Heart left ventricle (tissue), 16 donors: ENCODE measurements at regions of chr12 and their contacts with region 1.

Region 1: GRCh38 chr12:27549801-27550652 is 26.0 kb downstream of the PPFIBP1 start:
- DNase-seq: peak; percentile 85 to 91 (median 88)
- ATAC-seq: peak; percentile 81 to 90 (median 89)
- H3K4me3 ChIP-seq: peak overlapping the region in 8 of 12 donors; percentile 3 to 28 (median 18)
- H3K27ac ChIP-seq: peak overlapping the region; percentile 68 to 94 (median 87)
- H3K4me1 ChIP-seq: peaks cover 17 to 100% (median 89%) of the 10 kb centered on the region in 12 donors
- H3K27me3 ChIP-seq: no peaks in the 10 kb centered on the region
- CTCF ChIP-seq: no peak
- POLR2A ChIP-seq: no peak

Region 2: DNA sequence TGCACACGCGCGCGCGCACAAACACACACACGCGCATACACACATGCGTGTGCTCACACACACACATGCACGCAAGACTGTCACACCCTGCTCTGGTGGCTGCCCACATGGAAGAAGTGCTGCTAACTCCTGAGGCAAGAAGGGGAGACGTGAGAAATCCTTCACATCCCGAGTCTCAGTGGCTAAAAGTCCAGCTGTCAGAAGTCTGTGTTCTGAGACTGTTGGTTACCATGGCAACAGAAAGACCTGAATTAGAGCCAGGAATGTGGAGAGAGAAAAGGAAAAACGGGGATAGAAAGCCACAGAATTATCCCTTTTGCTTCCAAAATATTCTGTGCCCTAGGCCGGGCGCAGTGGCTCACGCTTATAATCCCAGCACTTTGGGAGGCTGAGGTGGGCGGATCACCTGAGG is 45.2 kb after region 1 on chr12:
- intact Hi-C with region 1: loop called in 1 of 10 experiments (anchors 5 kb)
- DNase-seq: peak in 3 of 5 donors; percentile 56 to 74 (median 67)
- ATAC-seq: peak; percentile 51 to 70 (median 62)
- H3K4me3 ChIP-seq: peak overlapping the region in 1 of 12 donors; percentile 16
- H3K27ac ChIP-seq: peak overlapping the region in 7 of 12 donors; percentile 2 to 65 (median 52)
- H3K4me1 ChIP-seq: peaks cover 6 to 73% (median 39%) of the 10 kb centered on the region in 12 donors
- H3K27me3 ChIP-seq: no peaks in the 10 kb centered on the region
- CTCF ChIP-seq: no peak
- POLR2A ChIP-seq: no peak

Region 3: DNA sequence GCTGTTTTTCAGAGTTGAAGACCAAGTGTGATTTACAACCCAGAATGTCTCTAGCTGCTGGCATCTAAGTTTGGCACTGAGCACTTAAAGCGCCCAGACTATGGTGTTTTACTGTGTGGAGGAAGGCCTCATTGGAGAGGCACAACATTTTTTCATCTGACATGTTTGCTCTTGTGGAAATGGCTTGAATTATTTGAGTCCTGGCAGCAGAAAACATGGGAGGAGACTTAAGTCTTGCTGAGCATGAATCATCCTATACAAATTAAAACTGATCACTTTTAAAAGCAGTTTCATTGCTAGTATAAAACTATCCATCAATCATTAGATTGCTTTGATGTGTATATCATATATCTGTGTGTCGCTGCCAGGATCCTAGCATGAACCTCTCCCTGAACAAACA is 60.3 kb after region 1 on chr12:
- intact Hi-C with region 1: no loop called
- DNase-seq: no peak
- ATAC-seq: peak in 2 of 4 donors; percentile 6 to 27
- H3K4me3 ChIP-seq: no peak overlapping the region
- H3K27ac ChIP-seq: peak overlapping the region in 1 of 12 donors; percentile 21
- H3K4me1 ChIP-seq: peaks cover 4 to 74% (median 42%) of the 10 kb centered on the region in 12 donors
- H3K27me3 ChIP-seq: no peaks in the 10 kb centered on the region
- CTCF ChIP-seq: no peak
- POLR2A ChIP-seq: no peak

Region 4: DNA sequence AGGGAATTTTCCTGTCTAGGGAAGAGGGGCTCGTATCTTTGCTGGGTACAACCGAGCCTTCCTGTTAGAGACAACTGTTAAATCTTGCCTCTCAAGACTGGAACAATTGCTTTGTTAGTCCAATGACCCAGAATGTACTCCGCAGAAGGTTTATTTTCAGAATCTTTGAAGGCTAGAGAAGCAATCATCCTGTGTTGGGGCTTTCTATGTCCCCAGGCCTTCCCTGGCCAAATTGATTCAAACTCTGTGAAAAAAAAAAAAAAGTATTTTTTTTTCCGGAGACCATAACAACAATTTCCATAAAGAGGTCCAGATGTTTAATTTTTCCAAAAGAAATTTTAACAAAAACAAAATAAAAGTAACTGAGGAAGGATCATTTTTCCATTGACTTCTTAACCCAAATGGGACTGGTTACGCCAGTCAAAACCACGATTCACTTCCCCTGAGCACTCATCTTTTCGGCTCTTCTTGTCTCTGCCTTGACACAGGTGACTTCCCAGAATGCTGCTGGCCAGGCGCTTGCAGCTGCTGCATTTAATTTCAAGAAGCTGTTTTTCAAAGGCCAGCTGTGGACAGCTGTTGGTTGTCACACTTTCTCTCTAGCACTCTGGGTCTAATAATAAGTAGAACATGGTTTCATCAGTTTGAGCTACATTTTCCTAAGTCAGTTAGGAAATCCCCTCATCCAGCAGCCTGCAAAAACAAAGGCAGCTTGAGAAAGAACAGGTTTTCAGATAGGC is 311.6 kb after region 1 on chr12:
- intact Hi-C with region 1: no loop called
- DNase-seq: peak in 4 of 5 donors; percentile 66 to 86 (median 75)
- ATAC-seq: peak; percentile 60 to 87 (median 80)
- H3K4me3 ChIP-seq: no peak overlapping the region
- H3K27ac ChIP-seq: peak overlapping the region in 7 of 12 donors; percentile 7 to 79 (median 53)
- H3K4me1 ChIP-seq: peaks cover 0 to 30% (median 0%) of the 10 kb centered on the region in 12 donors
- H3K27me3 ChIP-seq: no peaks in the 10 kb centered on the region
- CTCF ChIP-seq: no peak
- POLR2A ChIP-seq: no peak